IMR-90 (cell line): ENCODE measurements at regions of chr13 and their contacts with region 1.

Region 1: GRCh38 chr13:48492470-48493065 is 40.3 kb downstream of the RCBTB2 start:
- DNase-seq: peak; percentile 18
- ATAC-seq: no peak
- H3K4me3 ChIP-seq: peak overlapping the region; percentile 30; the same call in 1 of the 2 replicates
- H3K27ac ChIP-seq: no peak overlapping the region
- H3K4me1 ChIP-seq: no peaks in the 10 kb centered on the region
- H3K27me3 ChIP-seq: no peaks in the 10 kb centered on the region
- CTCF ChIP-seq: no peak
- POLR2A ChIP-seq: no peak
- RAD21 ChIP-seq: no peak

Region 2: DNA sequence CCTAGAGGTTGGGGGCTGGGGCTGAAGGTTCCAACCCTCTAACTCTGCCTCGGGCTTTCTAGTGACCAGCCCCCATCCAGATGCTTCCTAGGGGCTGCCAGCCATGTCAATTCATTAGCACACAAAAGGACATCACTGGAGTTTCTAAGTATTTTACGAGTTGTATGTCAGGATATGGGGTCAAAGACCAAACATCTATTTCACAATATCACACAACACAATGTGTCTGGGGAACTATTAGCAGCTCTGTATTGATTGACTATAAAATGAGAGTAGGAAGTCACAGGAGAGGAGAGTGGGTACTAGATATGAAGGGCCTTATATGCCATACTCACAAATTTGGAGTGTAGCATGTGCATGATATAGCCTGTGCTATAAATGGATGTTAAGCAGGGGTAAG is 121.8 kb before region 1 on chr13:
- CTCF ChIA-PET with region 1: no interaction called
- POLR2A ChIA-PET with region 1: interaction called, 12 read pairs
- dilution Hi-C with region 1: no loop called
- in situ Hi-C with region 1: no loop called
- intact Hi-C with region 1: no loop called
- DNase-seq: no peak
- ATAC-seq: no peak
- H3K4me3 ChIP-seq: no peak overlapping the region
- H3K27ac ChIP-seq: no peak overlapping the region
- H3K4me1 ChIP-seq: no peaks in the 10 kb centered on the region
- H3K27me3 ChIP-seq: no peaks in the 10 kb centered on the region
- CTCF ChIP-seq: no peak
- POLR2A ChIP-seq: no peak
- RAD21 ChIP-seq: no peak

Region 3: DNA sequence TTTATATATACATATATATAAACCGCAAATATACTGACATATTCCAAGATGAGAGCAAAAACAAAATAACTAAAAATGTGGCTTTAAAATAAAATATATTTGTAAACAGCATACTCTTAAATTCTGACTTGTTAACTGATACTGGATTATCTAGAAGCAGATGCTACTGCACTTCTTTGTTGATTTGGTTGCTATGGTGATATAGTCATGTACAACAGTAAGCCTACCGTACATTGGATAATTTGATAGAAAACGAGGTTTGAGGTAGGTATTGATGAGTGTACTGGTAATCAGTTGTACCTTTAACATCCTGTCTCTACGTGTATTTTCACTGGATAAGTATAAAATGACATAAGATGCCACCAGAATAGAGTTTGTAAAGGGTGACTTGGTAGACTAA is 540.5 kb after region 1 on chr13:
- CTCF ChIA-PET with region 1: no interaction called
- POLR2A ChIA-PET with region 1: no interaction called
- dilution Hi-C with region 1: no loop called
- in situ Hi-C with region 1: no loop called
- intact Hi-C with region 1: no loop called
- DNase-seq: no peak
- ATAC-seq: no peak
- H3K4me3 ChIP-seq: no peak overlapping the region
- H3K27ac ChIP-seq: no peak overlapping the region
- H3K4me1 ChIP-seq: no peaks in the 10 kb centered on the region
- H3K27me3 ChIP-seq: no peaks in the 10 kb centered on the region
- CTCF ChIP-seq: no peak
- POLR2A ChIP-seq: no peak
- RAD21 ChIP-seq: no peak